Kidney (tissue), 22 donors: ENCODE measurements at regions of chr7 and their contacts with region 1.

Region 1: GRCh38 chr7:45917658-45918057 is 3.4 kb downstream of the IGFBP3 start:
- DNase-seq: peak; percentile 84 to 93 (median 90)
- H3K4me3 ChIP-seq: peak overlapping the region in 1 of 3 donors; percentile 64
- H3K27ac ChIP-seq: no peak overlapping the region
- H3K4me1 ChIP-seq: peaks cover 7 to 19% (median 7%) of the 10 kb centered on the region in 3 donors
- H3K27me3 ChIP-seq: peaks cover 7% of the 10 kb centered on the region
- CTCF ChIP-seq: peak; percentile 87

Region 2: GRCh38 chr7:47179812-47180515 is 1262.3 kb after region 1 on chr7:
- intact Hi-C with region 1: loop called (anchors 10 kb)
- DNase-seq: peak in 4 of 5 donors; percentile 68 to 90 (median 82)
- H3K4me3 ChIP-seq: no peak overlapping the region
- H3K27ac ChIP-seq: no peak overlapping the region
- H3K4me1 ChIP-seq: peaks cover 0 to 5% (median 0%) of the 10 kb centered on the region in 3 donors
- H3K27me3 ChIP-seq: no peaks in the 10 kb centered on the region
- CTCF ChIP-seq: peak; percentile 88